ENCODE measurements at regions of chr5 and their contacts with region 1.

Region 1: GRCh38 chr5:178368274-178368673 is 135.7 kb upstream of the PHYKPL start:
- DNase-seq: peak; percentile 16

Region 2: DNA sequence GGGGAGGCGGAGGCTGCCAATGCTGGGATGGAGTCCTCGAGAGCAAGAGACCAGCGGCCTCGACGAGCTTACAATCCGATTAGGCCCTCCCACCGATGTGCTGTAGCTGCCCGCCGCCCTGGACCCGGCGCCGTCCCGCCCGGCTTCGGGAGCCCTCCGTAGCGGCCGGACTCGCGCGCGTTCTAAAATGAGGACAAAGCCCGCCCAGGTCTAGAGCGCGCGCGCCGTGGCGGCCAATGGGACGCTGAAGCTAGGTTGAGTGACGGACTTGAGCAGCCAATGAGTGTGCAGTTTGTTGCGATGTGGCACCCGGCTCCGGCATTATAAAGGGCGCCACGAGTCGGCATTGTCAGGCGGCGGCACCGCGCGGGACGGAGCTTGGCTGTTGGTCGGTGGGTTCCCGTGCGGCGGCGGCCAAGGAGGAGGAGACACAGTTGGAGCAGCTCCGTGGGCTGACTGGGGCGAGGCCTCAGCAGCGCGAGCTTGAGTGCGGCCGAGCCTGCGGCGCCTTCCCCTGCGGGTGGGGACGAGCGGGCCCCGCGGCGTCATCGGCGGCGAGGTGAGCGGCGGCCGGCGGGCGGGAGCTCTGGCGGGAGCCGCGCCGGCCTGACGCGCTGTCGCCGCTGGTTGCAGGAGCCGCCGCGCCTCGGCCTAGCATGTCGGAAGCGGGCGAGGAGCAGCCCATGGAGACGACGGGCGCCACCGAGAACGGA is 163.9 kb before region 1 on chr5 and contains the start of gene HNRNPAB:
- intact Hi-C with region 1: no loop called
- DNase-seq: peak; percentile 99
- total RNA-seq, gene HNRNPAB: 97.0 to 133 TPM

Region 3: GRCh38 chr5:178383919-178384815 is 15.9 kb after region 1 on chr5:
- intact Hi-C with region 1: loop called in 1 of 2 experiments (anchors 1 kb)
- DNase-seq: peak; percentile 78